ENCODE measurements at regions of chr2 and their contacts with region 1.

Region 1: GRCh38 chr2:238288650-238289573 is 502 bp upstream of the PER2 start:
- DNase-seq: peak; percentile 96 to 99 (median 98)
- ATAC-seq: peak; percentile 93
- H3K4me3 ChIP-seq: peak overlapping the region; percentile 73
- H3K4me3 Mint-ChIP-seq: peak overlapping the region; percentile 84 to 97 (median 93)
- H3K27ac ChIP-seq: peak overlapping the region; percentile 80
- H3K27ac Mint-ChIP-seq: peak overlapping the region; percentile 93 to 98 (median 97)
- H3K4me1 ChIP-seq: peaks cover 16 to 23% of the 10 kb centered on the region in 2 donors
- H3K4me1 Mint-ChIP-seq: peaks cover 26 to 56% (median 40%) of the 10 kb centered on the region in 7 donors
- H3K27me3 ChIP-seq: no peaks in the 10 kb centered on the region
- H3K27me3 Mint-ChIP-seq: peaks cover 0 to 2% (median 0%) of the 10 kb centered on the region in 5 donors

Region 2: GRCh38 chr2:237085248-237086221 is 1203.4 kb before region 1 on chr2 and contains the start of gene COPS8:
- CTCF ChIA-PET with region 1: no interaction called
- POLR2A ChIA-PET with region 1: no interaction called
- intact Hi-C with region 1: loop called (anchors 1 to 2 kb)
- DNase-seq: peak; percentile 82 to 93 (median 89)
- ATAC-seq: peak; percentile 99
- H3K4me3 ChIP-seq: peak within 1 kb of the TSS; percentile 95
- H3K4me3 Mint-ChIP-seq: peak within 1 kb of the TSS; percentile 95 to 100 (median 99)
- H3K27ac ChIP-seq: peak within 1 kb of the TSS; percentile 83
- H3K27ac Mint-ChIP-seq: peak within 1 kb of the TSS; percentile 94 to 99 (median 99)
- H3K4me1 ChIP-seq: peaks cover 8 to 15% of the 10 kb centered on the region in 2 donors
- H3K4me1 Mint-ChIP-seq: peaks cover 23 to 52% (median 28%) of the 10 kb centered on the region in 7 donors
- H3K27me3 ChIP-seq: no peaks in the 10 kb centered on the region
- H3K27me3 Mint-ChIP-seq: no peaks in the 10 kb centered on the region
- total RNA-seq, gene COPS8: 31.2 to 46.4 (median 40.8) TPM

Region 3: GRCh38 chr2:237951878-237952277 is 337.0 kb before region 1 on chr2:
- CTCF ChIA-PET with region 1: no interaction called
- POLR2A ChIA-PET with region 1: no interaction called
- intact Hi-C with region 1: no loop called
- DNase-seq: no peak
- ATAC-seq: no peak
- H3K4me3 ChIP-seq: no peak overlapping the region
- H3K4me3 Mint-ChIP-seq: no peak overlapping the region
- H3K27ac ChIP-seq: no peak overlapping the region
- H3K27ac Mint-ChIP-seq: peak overlapping the region in 2 of 9 donors; percentile 51 to 52
- H3K4me1 ChIP-seq: no peaks in the 10 kb centered on the region
- H3K4me1 Mint-ChIP-seq: peaks cover 2 to 22% (median 15%) of the 10 kb centered on the region in 7 donors
- H3K27me3 ChIP-seq: no peaks in the 10 kb centered on the region
- H3K27me3 Mint-ChIP-seq: peaks cover 6 to 33% (median 8%) of the 10 kb centered on the region in 5 donors

Region 4: GRCh38 chr2:238060542-238061314 is 228.2 kb before region 1 on chr2 and contains the start of gene SCLY:
- CTCF ChIA-PET with region 1: no interaction called
- POLR2A ChIA-PET with region 1: no interaction called
- intact Hi-C with region 1: loop called (anchors 1 kb)
- DNase-seq: peak; percentile 86 to 95 (median 93)
- ATAC-seq: peak; percentile 99
- H3K4me3 ChIP-seq: peak within 1 kb of the TSS; percentile 96
- H3K4me3 Mint-ChIP-seq: peak within 1 kb of the TSS; percentile 85 to 98 (median 88)
- H3K27ac ChIP-seq: peak within 1 kb of the TSS; percentile 85
- H3K27ac Mint-ChIP-seq: peak within 1 kb of the TSS; percentile 80 to 93 (median 90)
- H3K4me1 ChIP-seq: peaks cover 5 to 12% of the 10 kb centered on the region in 2 donors
- H3K4me1 Mint-ChIP-seq: peaks cover 24 to 57% (median 37%) of the 10 kb centered on the region in 7 donors
- H3K27me3 ChIP-seq: peaks cover 0 to 3% of the 10 kb centered on the region in 2 donors
- H3K27me3 Mint-ChIP-seq: peaks cover 3 to 16% (median 13%) of the 10 kb centered on the region in 5 donors
- total RNA-seq, gene SCLY: 16.1 to 47.3 (median 29.1) TPM

Region 5: DNA sequence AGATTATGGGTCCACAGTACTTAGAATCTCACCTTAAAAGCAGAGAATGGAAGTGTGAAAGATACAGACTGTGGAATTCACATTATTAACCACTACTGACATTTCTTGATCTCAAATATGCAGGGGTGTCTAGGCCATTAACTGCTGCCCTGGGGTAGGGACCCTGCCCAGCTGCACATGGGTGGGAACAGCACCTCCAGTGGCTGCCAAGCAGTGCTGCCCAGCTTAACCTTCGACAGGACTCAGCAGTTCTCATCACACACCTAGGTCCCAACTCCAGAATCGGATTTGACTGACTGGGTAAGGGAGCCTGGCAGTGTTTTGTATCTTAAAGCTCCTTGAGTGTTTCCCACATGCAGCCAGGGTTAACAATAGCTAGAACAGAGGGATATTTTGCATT is 115.2 kb before region 1 on chr2:
- CTCF ChIA-PET with region 1: no interaction called
- POLR2A ChIA-PET with region 1: no interaction called
- intact Hi-C with region 1: no loop called
- DNase-seq: no peak
- ATAC-seq: no peak
- H3K4me3 ChIP-seq: no peak overlapping the region
- H3K4me3 Mint-ChIP-seq: no peak overlapping the region
- H3K27ac ChIP-seq: no peak overlapping the region
- H3K27ac Mint-ChIP-seq: peak overlapping the region in 3 of 9 donors; percentile 8 to 62 (median 47)
- H3K4me1 ChIP-seq: no peaks in the 10 kb centered on the region
- H3K4me1 Mint-ChIP-seq: peaks cover 0 to 3% (median 0%) of the 10 kb centered on the region in 7 donors
- H3K27me3 ChIP-seq: no peaks in the 10 kb centered on the region
- H3K27me3 Mint-ChIP-seq: no peaks in the 10 kb centered on the region

Region 6: GRCh38 chr2:238231251-238231793 is 57.6 kb before region 1 on chr2:
- CTCF ChIA-PET with region 1: no interaction called
- POLR2A ChIA-PET with region 1: interaction called, 3 read pairs
- intact Hi-C with region 1: loop called in 1 of 2 experiments (anchors 1 kb)
- DNase-seq: peak; percentile 37 to 84 (median 76)
- ATAC-seq: peak; percentile 94
- H3K4me3 ChIP-seq: peak overlapping the region; percentile 66
- H3K4me3 Mint-ChIP-seq: peak overlapping the region; percentile 70 to 91 (median 86)
- H3K27ac ChIP-seq: peak overlapping the region; percentile 31
- H3K27ac Mint-ChIP-seq: peak overlapping the region in 7 of 9 donors; percentile 39 to 86 (median 76)
- H3K4me1 ChIP-seq: peaks cover 5 to 8% of the 10 kb centered on the region in 2 donors
- H3K4me1 Mint-ChIP-seq: peaks cover 14 to 33% (median 26%) of the 10 kb centered on the region in 7 donors
- H3K27me3 ChIP-seq: peaks cover 0 to 5% of the 10 kb centered on the region in 2 donors
- H3K27me3 Mint-ChIP-seq: peaks cover 11 to 63% (median 16%) of the 10 kb centered on the region in 5 donors

Region 7: DNA sequence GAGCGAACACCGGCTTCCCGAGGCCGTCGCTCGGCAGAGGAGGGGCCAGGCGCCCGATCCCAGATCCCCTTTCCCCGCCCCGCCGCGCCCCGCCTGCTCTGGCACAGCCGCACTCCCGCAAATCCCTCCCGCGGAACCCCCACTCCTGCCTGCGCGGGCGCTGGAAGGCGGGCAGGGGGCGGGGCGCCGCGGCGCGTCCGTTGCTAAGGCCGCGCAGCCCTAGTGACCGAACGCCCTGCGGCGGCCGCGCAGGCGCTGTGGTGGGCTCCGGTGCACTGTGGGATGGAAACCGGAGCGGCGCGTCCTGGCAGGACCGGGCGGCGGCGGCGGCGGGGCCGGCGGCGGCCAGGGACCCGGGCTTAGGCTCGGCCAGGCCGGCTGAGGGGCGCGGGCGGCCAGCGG is 31.3 kb after region 1 on chr2 and contains the start of gene TRAF3IP1:
- CTCF ChIA-PET with region 1: no interaction called
- POLR2A ChIA-PET with region 1: interaction called, 4 read pairs
- intact Hi-C with region 1: loop called (anchors 1 kb)
- DNase-seq: peak; percentile 75 to 92 (median 86)
- ATAC-seq: peak; percentile 97
- H3K4me3 ChIP-seq: peak within 1 kb of the TSS; percentile 69
- H3K4me3 Mint-ChIP-seq: peak within 1 kb of the TSS; percentile 77 to 89 (median 82)
- H3K27ac ChIP-seq: peak within 1 kb of the TSS; percentile 51
- H3K27ac Mint-ChIP-seq: peak within 1 kb of the TSS in 6 of 9 donors; percentile 4 to 69 (median 45)
- H3K4me1 ChIP-seq: peaks cover 7 to 15% of the 10 kb centered on the region in 2 donors
- H3K4me1 Mint-ChIP-seq: peaks cover 9 to 29% (median 24%) of the 10 kb centered on the region in 7 donors
- H3K27me3 ChIP-seq: no peaks in the 10 kb centered on the region
- H3K27me3 Mint-ChIP-seq: peaks cover 0 to 34% (median 6%) of the 10 kb centered on the region in 5 donors
- total RNA-seq, gene TRAF3IP1: 6.2 to 13.3 (median 9.4) TPM

Region 8: GRCh38 chr2:238389926-238390597 is 101.2 kb after region 1 on chr2:
- CTCF ChIA-PET with region 1: no interaction called
- POLR2A ChIA-PET with region 1: no interaction called
- intact Hi-C with region 1: no loop called
- DNase-seq: no peak
- ATAC-seq: no peak
- H3K4me3 ChIP-seq: no peak overlapping the region
- H3K4me3 Mint-ChIP-seq: no peak overlapping the region
- H3K27ac ChIP-seq: no peak overlapping the region
- H3K27ac Mint-ChIP-seq: no peak overlapping the region
- H3K4me1 ChIP-seq: no peaks in the 10 kb centered on the region
- H3K4me1 Mint-ChIP-seq: peaks cover 0 to 6% (median 0%) of the 10 kb centered on the region in 7 donors
- H3K27me3 ChIP-seq: no peaks in the 10 kb centered on the region
- H3K27me3 Mint-ChIP-seq: no peaks in the 10 kb centered on the region

Region 9: DNA sequence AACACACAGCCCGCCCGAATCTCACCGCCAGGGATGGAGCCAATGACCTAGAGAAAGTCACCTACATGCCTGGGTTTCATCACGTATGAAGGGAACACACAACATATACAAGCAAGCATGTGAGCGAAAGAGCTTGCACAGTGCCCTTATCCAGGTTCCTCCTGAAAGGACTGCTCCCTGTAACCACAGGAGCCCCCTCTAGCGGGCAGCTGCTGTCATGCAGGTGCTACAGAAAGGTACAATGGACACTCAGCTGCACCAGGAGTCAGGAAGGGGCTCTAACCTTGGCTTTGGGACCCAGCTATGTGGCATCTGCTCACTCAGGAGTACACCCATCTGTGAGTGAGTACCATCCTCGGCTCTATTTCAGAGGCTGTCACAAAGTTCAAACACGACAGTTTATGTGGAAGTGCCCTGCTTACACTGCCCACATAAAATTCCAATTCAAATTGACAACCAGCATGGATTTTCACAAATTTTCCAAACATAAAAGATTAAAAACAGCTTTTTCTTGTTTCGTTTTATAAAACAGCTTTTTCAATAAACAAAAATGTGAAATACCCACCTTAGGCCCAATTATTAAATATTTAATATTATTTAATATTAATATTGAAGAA is 1732.7 kb after region 1 on chr2:
- CTCF ChIA-PET with region 1: no interaction called
- POLR2A ChIA-PET with region 1: no interaction called
- intact Hi-C with region 1: loop called in 1 of 2 experiments (anchors 10 kb)
- DNase-seq: peak; percentile 18 to 68 (median 51)
- ATAC-seq: peak; percentile 43
- H3K4me3 ChIP-seq: no peak overlapping the region
- H3K4me3 Mint-ChIP-seq: no peak overlapping the region
- H3K27ac ChIP-seq: no peak overlapping the region
- H3K27ac Mint-ChIP-seq: peak overlapping the region in 1 of 9 donors; percentile 32
- H3K4me1 ChIP-seq: peaks cover 8 to 15% of the 10 kb centered on the region in 2 donors
- H3K4me1 Mint-ChIP-seq: peaks cover 15 to 39% (median 35%) of the 10 kb centered on the region in 7 donors
- H3K27me3 ChIP-seq: no peaks in the 10 kb centered on the region
- H3K27me3 Mint-ChIP-seq: peaks cover 0 to 2% (median 0%) of the 10 kb centered on the region in 5 donors

Measured in naive thymus-derived CD4-positive, alpha-beta T cell (primary cell).